Activated CD4-positive, alpha-beta T cell treated with anti-CD3 and anti-CD28 coated beads, Interleukin-2, amount 10 ng/mL, durations not matched to agents 24 days and 14 days (primary cell): ENCODE measurements at regions of chr3 and their contacts with region 1.

Region 1: GRCh38 chr3:28916713-28917499 is 364.0 kb upstream of the RBMS3 start:
- DNase-seq: peak; percentile 76
- H3K4me3 Mint-ChIP-seq: no peak overlapping the region
- H3K27ac Mint-ChIP-seq: no peak overlapping the region
- H3K4me1 Mint-ChIP-seq: peaks cover 11% of the 10 kb centered on the region
- H3K27me3 Mint-ChIP-seq: peaks cover 7% of the 10 kb centered on the region

Region 2: GRCh38 chr3:28891485-28891884 is 25.4 kb before region 1 on chr3:
- intact Hi-C with region 1: no loop called
- DNase-seq: no peak
- H3K4me3 Mint-ChIP-seq: no peak overlapping the region
- H3K27ac Mint-ChIP-seq: no peak overlapping the region
- H3K4me1 Mint-ChIP-seq: no peaks in the 10 kb centered on the region
- H3K27me3 Mint-ChIP-seq: peaks cover 1% of the 10 kb centered on the region

Region 3: DNA sequence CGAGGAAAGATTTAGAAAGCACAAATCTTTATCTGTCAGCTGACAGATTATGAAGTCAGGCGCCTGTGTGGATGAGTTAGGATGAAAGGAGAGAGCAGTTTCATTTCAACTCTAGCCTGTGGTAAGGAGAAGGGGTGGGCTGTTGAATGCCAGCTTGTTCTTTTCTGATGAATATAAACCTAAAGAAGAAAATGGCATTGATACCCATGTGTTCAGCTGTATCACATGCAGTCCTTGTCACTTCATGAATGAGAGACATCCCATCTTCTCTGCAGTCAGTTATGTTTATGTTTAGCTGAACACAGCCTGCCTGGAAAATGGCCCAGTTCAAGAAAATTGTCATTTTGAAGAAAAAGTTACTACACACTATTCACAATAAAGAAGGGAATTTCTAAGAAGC is 18.2 kb after region 1 on chr3:
- intact Hi-C with region 1: loop called (anchors 2 kb)
- DNase-seq: peak; percentile 61
- H3K4me3 Mint-ChIP-seq: peak overlapping the region; percentile 74
- H3K27ac Mint-ChIP-seq: peak overlapping the region; percentile 85
- H3K4me1 Mint-ChIP-seq: peaks cover 40% of the 10 kb centered on the region
- H3K27me3 Mint-ChIP-seq: no peaks in the 10 kb centered on the region

Region 4: GRCh38 chr3:29026286-29026685 is 109.4 kb after region 1 on chr3:
- intact Hi-C with region 1: no loop called
- DNase-seq: no peak
- H3K4me3 Mint-ChIP-seq: no peak overlapping the region
- H3K27ac Mint-ChIP-seq: peak overlapping the region; percentile 71
- H3K4me1 Mint-ChIP-seq: peaks cover 5% of the 10 kb centered on the region
- H3K27me3 Mint-ChIP-seq: no peaks in the 10 kb centered on the region

Region 5: DNA sequence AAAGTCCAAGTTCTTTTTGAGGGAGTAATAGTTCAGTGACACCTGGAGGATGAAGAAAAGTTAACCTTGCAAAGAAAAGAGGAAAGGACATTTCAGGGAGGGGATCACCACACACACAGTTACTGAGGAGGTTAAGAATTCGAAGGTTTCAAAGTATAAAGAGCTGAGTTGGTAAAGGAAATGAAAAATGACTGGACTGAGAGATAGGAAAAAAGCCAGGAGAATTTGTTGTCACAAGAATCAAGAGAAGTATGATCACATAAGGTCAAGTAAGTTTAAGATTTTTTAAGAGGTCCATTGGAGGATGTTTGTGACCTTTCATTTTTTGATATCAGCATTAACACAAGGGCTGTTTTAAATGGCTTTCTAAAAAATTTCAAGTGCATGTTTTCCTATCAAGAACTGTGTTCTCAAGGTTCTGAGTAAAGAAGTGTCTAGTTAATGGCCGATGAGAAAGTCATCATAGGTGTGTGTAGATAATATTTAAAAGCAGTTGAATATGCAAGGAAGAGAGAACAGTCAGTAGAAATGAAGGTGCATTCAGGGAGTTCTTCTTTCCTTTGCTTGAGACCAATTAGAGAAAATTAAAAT is 174.8 kb after region 1 on chr3:
- intact Hi-C with region 1: loop called (anchors 5 kb)
- DNase-seq: no peak
- H3K4me3 Mint-ChIP-seq: no peak overlapping the region
- H3K27ac Mint-ChIP-seq: peak overlapping the region; percentile 52
- H3K4me1 Mint-ChIP-seq: peaks cover 2% of the 10 kb centered on the region
- H3K27me3 Mint-ChIP-seq: no peaks in the 10 kb centered on the region

Region 6: DNA sequence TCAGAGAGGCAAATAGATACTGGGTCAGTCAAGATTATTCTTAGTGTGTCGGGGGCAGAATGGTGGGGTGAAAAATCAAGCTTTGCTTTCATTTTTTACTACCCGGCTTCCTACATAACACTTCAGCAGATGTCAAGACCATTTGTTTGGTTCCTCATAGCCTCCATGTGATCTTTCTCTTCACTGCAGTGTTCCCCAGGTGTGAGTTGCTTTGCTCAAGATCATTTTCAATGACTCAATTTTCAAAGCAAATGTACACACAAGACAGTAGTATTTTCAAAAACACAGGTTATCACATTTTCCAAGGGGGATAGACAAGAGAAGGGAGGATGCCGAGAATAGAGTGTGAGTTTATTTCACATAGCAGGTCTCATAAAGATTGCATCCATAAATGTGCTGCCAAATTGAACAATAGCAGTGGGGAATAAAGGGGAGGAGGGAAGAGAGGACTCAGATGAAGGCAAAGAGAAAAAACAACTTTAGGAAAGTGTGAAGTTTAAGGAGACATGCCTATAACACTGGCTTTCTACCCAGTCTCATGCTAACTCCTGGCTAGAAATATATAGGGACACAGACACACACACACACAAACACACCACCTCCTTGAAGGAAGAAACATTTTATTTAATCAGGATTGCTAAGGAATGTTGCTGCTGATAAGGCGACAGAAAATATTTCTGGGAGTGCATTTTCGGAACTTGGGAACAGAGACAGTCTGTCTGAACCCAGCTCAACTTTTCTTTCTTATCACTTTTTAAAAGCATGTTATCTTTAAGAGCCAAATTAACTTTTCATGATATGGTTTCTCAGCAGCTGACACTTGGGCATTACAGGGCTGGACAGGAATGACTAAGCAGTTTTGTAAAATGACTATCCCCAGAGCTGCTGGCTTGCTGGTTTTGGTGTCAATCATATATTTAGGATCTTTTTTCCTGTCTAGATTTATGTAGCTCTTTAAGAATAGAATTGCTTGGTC is 766.4 kb after region 1 on chr3:
- intact Hi-C with region 1: loop called (anchors 2 kb)
- DNase-seq: no peak
- H3K4me3 Mint-ChIP-seq: no peak overlapping the region
- H3K27ac Mint-ChIP-seq: no peak overlapping the region
- H3K4me1 Mint-ChIP-seq: peaks cover 9% of the 10 kb centered on the region
- H3K27me3 Mint-ChIP-seq: peaks cover 6% of the 10 kb centered on the region

Region 7: GRCh38 chr3:29764603-29765254 is 847.8 kb after region 1 on chr3:
- intact Hi-C with region 1: loop called (anchors 5 kb)
- DNase-seq: no peak
- H3K4me3 Mint-ChIP-seq: no peak overlapping the region
- H3K27ac Mint-ChIP-seq: no peak overlapping the region
- H3K4me1 Mint-ChIP-seq: no peaks in the 10 kb centered on the region
- H3K27me3 Mint-ChIP-seq: peaks cover 6% of the 10 kb centered on the region

Region 8: GRCh38 chr3:30199096-30199759 is 1282.3 kb after region 1 on chr3:
- intact Hi-C with region 1: loop called (anchors 10 kb)
- DNase-seq: peak; percentile 89
- H3K4me3 Mint-ChIP-seq: no peak overlapping the region
- H3K27ac Mint-ChIP-seq: no peak overlapping the region
- H3K4me1 Mint-ChIP-seq: peaks cover 4% of the 10 kb centered on the region
- H3K27me3 Mint-ChIP-seq: peaks cover 2% of the 10 kb centered on the region